ENCODE measurements at regions of chr19 and their contacts with region 1.

Region 1: GRCh38 chr19:36418287-36419001 is at the start of gene ZFP82:
- DNase-seq: peak; percentile 47 to 83 (median 76)
- ATAC-seq: peak; percentile 94
- H3K4me3 ChIP-seq: peak within 1 kb of the TSS; percentile 82
- H3K4me3 Mint-ChIP-seq: peak within 1 kb of the TSS; percentile 89 to 96 (median 93)
- H3K27ac ChIP-seq: peak within 1 kb of the TSS; percentile 83
- H3K27ac Mint-ChIP-seq: peak within 1 kb of the TSS; percentile 82 to 95 (median 91)
- H3K4me1 ChIP-seq: peaks cover 6 to 13% of the 10 kb centered on the region in 2 donors
- H3K4me1 Mint-ChIP-seq: peaks cover 10 to 36% (median 21%) of the 10 kb centered on the region in 7 donors
- H3K27me3 ChIP-seq: peaks cover 0 to 9% of the 10 kb centered on the region in 2 donors
- H3K27me3 Mint-ChIP-seq: peaks cover 14 to 23% (median 22%) of the 10 kb centered on the region in 5 donors
- total RNA-seq, gene ZFP82: 2.2 to 8.2 (median 5.7) TPM

Region 2: DNA sequence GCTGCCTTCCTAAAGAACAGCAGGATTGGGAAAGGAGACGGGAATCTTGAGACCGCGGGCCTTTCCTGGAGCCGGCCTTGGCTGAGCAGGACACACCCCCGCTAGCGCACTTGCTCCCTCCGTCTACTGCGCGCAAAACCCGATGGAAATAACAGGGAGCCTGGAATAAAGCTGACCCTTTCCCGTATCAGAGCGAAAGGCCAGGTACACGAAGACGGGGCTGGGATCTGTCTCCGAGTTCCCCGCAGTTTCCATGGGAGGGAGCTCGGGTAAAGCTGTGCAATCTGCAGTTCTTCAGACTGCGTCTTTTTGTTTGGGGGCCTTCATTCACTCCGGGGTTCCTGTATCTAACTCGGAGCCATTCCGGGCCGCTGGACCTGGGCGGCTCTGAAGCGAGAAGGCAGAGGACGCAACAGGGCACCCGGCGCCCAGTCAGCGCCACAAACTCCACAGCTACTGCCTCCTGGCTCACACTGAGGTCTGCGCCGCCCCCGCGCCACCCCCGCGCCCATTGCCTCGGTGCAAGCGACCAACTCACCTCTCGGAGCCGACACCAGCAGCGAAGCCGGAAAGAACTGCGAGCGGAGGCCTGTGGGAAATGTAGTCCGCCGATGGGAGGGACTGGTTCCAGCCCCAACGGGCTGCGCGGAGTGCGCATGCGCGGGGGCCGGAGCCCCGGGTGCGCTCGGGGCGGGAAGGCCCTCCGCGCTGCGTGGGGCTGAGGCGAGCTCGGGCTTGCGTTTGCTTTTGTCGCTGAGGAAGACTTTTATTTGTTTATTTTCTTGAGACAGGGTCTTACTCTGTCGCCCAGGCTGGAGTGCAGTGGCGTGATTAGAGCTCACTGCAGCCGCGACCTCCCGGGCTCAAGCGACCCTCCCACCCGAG is 39.6 kb before region 1 on chr19 and contains the start of gene ZFP14:
- CTCF ChIA-PET with region 1: interaction called, 3 read pairs
- POLR2A ChIA-PET with region 1: no interaction called
- intact Hi-C with region 1: loop called (anchors 1 kb)
- DNase-seq: peak; percentile 86 to 95 (median 93)
- ATAC-seq: peak; percentile 99
- H3K4me3 ChIP-seq: peak within 1 kb of the TSS; percentile 86
- H3K4me3 Mint-ChIP-seq: peak within 1 kb of the TSS; percentile 82 to 98 (median 94)
- H3K27ac ChIP-seq: peak within 1 kb of the TSS; percentile 86
- H3K27ac Mint-ChIP-seq: peak within 1 kb of the TSS; percentile 55 to 98 (median 94)
- H3K4me1 ChIP-seq: peaks cover 0 to 10% of the 10 kb centered on the region in 2 donors
- H3K4me1 Mint-ChIP-seq: peaks cover 9 to 23% (median 21%) of the 10 kb centered on the region in 7 donors
- H3K27me3 ChIP-seq: no peaks in the 10 kb centered on the region
- H3K27me3 Mint-ChIP-seq: no peaks in the 10 kb centered on the region
- total RNA-seq, gene ZFP14: 5.3 to 24.0 (median 9.2) TPM